Cardiac septum (tissue), 1 donor: ENCODE measurements at regions of chr10 and their contacts with region 1.

Region 1: GRCh38 chr10:63083904-63084689 is 49.0 kb upstream of the NRBF2 start:
- DNase-seq: no peak

Region 2: GRCh38 chr10:62437696-62438095 is 646.4 kb before region 1 on chr10:
- intact Hi-C with region 1: loop called (anchors 10 kb)
- DNase-seq: no peak

Region 3: DNA sequence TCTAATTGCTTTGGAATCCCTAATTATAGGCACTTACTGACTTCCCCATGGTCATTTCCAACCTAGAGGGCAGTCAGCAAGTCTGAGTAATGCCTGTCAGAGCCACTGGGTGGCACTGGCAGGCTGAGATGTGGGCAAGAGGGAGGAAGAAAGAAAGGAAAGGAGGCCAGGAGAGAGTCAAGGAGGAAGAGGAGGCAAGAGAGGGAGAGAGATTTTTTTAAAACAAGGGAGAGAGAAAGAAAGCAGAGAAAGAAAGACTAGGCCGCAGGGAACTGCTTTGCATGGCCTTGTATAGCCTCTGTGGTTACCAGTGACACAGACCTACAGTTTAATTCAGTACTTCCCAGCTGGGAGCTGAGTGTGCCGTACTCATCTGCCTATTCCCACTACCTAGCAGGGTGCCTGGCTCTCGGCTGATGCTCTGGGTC is 490.0 kb before region 1 on chr10:
- intact Hi-C with region 1: loop called (anchors 2 kb)
- DNase-seq: peak; percentile 84

Region 4: DNA sequence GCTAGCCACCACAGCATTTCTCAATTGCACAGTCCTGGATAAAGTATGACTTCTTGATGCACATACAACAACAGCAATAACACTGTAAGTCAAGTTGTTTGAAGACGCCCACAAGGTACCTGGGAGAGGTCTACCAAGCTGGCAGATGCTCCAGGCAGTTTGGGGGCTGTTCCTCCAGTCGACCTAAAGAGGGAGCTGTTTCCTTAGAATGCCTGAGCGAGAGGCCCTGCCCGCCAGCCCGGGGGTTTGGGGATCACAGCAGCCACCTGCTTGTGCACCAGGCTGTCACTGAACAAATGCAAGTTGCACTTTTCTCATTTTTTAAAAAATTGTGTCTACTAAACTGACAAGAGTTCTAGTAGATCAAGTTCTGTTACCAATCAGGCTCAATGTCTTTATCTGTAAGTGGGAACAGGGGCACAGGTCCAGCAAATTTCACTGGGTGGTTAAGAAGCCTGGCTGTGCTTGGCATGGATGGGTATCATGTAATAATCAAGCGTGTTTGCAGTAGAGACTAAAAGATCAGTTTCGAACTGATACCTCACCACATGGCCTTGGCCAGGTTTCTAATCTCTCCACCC is 473.4 kb before region 1 on chr10:
- intact Hi-C with region 1: loop called (anchors 5 kb)
- DNase-seq: peak; percentile 81

Region 5: GRCh38 chr10:62946278-62946677 is 137.8 kb before region 1 on chr10:
- intact Hi-C with region 1: no loop called
- DNase-seq: no peak

Region 6: DNA sequence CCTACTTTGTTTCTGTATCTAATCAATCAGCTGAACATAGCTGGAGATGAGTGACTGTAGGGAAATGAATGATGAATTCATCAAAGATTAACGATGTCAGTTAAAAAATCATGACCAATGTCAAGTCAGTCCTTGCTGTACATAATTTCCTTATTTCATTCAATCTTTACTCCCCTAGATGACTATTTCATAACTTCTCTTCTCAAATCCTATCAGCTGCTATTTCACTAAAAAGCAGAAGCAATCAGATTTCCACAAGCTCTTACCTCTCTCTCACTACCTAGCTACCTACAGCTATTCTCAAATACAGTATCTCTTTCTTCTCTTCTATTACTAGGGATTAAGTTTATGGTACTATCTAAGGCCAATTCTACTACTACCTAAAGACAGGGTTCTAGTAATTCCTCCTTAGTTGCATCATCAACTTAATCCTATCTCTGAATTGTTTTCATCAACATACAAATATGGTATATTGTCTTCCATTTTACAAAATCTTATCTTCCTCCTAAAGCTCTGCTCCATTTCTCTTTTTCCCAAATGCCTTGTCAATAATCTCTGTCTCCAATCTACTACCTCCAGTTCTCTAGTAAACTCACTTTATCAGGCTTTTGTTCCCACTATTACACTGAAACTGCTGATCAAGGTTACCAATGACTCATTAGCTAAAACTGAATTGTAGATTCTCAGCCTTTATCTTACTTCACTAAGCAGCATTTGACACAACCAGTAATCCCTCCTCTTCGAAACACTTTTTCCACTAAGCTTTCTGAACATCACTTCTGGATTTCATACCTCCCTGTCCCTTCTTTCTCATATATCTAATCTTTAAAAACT is 353.2 kb after region 1 on chr10:
- intact Hi-C with region 1: no loop called
- DNase-seq: no peak